ENCODE measurements at regions of chr19 and their contacts with region 1.

Region 1: GRCh38 chr19:47013041-47013517 is 6.6 kb upstream of the NPAS1 start:
- DNase-seq: peak; percentile 66
- ATAC-seq: peak; percentile 81
- H3K4me3 Mint-ChIP-seq: no peak overlapping the region
- H3K27ac Mint-ChIP-seq: peak overlapping the region; percentile 10
- H3K4me1 Mint-ChIP-seq: peaks cover 10% of the 10 kb centered on the region
- H3K27me3 Mint-ChIP-seq: peaks cover 8% of the 10 kb centered on the region

Region 2: DNA sequence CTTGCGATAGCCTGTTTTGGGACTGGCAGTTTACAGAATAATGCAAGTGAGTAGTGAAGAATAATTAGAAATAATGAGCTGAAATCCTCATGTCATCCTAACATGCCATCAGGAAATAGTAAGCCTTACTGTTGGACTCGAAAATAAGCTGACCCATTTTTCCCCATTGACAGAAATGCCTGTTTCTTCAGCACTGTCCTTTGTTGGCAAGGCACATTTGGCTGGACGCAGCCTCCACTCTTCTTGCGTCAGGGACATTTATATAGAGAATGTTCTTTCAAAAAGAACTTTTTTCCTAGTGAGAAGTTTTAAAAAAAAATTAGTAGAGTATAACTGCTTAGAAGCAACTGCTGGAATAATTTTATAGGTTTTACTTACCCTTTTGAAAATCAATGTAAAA is 105.2 kb before region 1 on chr19:
- CTCF ChIA-PET with region 1: interaction called, 16 read pairs
- POLR2A ChIA-PET with region 1: no interaction called
- DNase-seq: no peak
- ATAC-seq: no peak
- H3K4me3 Mint-ChIP-seq: no peak overlapping the region
- H3K27ac Mint-ChIP-seq: no peak overlapping the region
- H3K4me1 Mint-ChIP-seq: peaks cover 17% of the 10 kb centered on the region
- H3K27me3 Mint-ChIP-seq: no peaks in the 10 kb centered on the region

Region 3: GRCh38 chr19:46924874-46925547 is 88.1 kb before region 1 on chr19:
- CTCF ChIA-PET with region 1: interaction called, 13 read pairs
- POLR2A ChIA-PET with region 1: no interaction called
- DNase-seq: peak; percentile 56
- ATAC-seq: peak; percentile 82
- H3K4me3 Mint-ChIP-seq: no peak overlapping the region
- H3K27ac Mint-ChIP-seq: peak overlapping the region; percentile 60
- H3K4me1 Mint-ChIP-seq: peaks cover 41% of the 10 kb centered on the region
- H3K27me3 Mint-ChIP-seq: no peaks in the 10 kb centered on the region

Region 4: GRCh38 chr19:47002107-47002766 is 10.8 kb before region 1 on chr19:
- CTCF ChIA-PET with region 1: interaction called, 23 read pairs
- POLR2A ChIA-PET with region 1: no interaction called
- DNase-seq: no peak
- ATAC-seq: no peak
- H3K4me3 Mint-ChIP-seq: no peak overlapping the region
- H3K27ac Mint-ChIP-seq: no peak overlapping the region
- H3K4me1 Mint-ChIP-seq: peaks cover 1% of the 10 kb centered on the region
- H3K27me3 Mint-ChIP-seq: peaks cover 27% of the 10 kb centered on the region

Region 5: GRCh38 chr19:47112997-47113849 is 100.1 kb after region 1 on chr19 and contains the start of gene ZC3H4:
- CTCF ChIA-PET with region 1: interaction called, 15 read pairs
- POLR2A ChIA-PET with region 1: interaction called, 4 read pairs
- DNase-seq: peak; percentile 100
- ATAC-seq: peak; percentile 86
- H3K4me3 Mint-ChIP-seq: peak within 1 kb of the TSS; percentile 95
- H3K27ac Mint-ChIP-seq: peak within 1 kb of the TSS; percentile 100
- H3K4me1 Mint-ChIP-seq: peaks cover 29% of the 10 kb centered on the region
- H3K27me3 Mint-ChIP-seq: no peaks in the 10 kb centered on the region
- total RNA-seq, gene ZC3H4: 102 TPM

Region 6: DNA sequence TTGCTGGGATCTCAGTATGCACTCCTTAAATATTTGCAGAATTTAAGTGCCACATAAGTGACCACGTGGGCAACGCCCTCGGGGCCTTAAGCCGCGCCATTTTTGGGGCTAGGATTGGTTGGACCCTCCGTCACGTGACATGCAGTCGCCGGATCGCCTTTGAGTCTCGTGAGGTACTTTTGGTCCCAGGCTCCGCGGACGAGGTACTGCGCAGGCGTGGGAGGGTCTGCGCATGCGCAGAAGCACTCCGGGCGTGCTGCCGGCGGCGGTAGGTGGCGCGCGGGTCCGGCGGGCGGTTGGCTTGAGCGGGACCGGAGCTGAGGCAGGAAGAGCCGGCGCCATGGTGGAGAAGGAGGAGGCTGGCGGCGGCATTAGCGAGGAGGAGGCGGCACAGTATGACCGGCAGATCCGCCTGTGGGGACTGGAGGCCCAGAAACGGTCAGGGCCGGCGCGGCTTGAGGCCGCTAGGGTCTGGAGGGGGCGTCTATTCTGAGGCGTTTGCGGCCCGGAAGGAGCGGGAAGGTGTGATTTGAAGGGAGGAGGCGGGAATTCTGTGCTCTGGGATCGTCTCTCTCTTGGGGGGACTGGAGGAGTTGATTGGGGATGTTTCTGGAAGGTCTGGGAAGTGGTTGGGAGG is 117.6 kb after region 1 on chr19 and contains the start of gene SAE1:
- CTCF ChIA-PET with region 1: interaction called, 22 read pairs
- POLR2A ChIA-PET with region 1: no interaction called
- DNase-seq: peak; percentile 94
- ATAC-seq: peak; percentile 91
- H3K4me3 Mint-ChIP-seq: peak within 1 kb of the TSS; percentile 99
- H3K27ac Mint-ChIP-seq: peak within 1 kb of the TSS; percentile 98
- H3K4me1 Mint-ChIP-seq: peaks cover 51% of the 10 kb centered on the region
- H3K27me3 Mint-ChIP-seq: no peaks in the 10 kb centered on the region
- total RNA-seq, gene SAE1: 165 to 175 TPM

Region 7: GRCh38 chr19:47210689-47211316 is 197.7 kb after region 1 on chr19:
- CTCF ChIA-PET with region 1: interaction called, 10 read pairs
- POLR2A ChIA-PET with region 1: no interaction called
- DNase-seq: peak; percentile 90
- ATAC-seq: peak; percentile 79
- H3K4me3 Mint-ChIP-seq: no peak overlapping the region
- H3K27ac Mint-ChIP-seq: peak overlapping the region; percentile 91
- H3K4me1 Mint-ChIP-seq: peaks cover 19% of the 10 kb centered on the region
- H3K27me3 Mint-ChIP-seq: no peaks in the 10 kb centered on the region